ENCODE measurements at regions of chr3 and their contacts with region 1.

Region 1: DNA sequence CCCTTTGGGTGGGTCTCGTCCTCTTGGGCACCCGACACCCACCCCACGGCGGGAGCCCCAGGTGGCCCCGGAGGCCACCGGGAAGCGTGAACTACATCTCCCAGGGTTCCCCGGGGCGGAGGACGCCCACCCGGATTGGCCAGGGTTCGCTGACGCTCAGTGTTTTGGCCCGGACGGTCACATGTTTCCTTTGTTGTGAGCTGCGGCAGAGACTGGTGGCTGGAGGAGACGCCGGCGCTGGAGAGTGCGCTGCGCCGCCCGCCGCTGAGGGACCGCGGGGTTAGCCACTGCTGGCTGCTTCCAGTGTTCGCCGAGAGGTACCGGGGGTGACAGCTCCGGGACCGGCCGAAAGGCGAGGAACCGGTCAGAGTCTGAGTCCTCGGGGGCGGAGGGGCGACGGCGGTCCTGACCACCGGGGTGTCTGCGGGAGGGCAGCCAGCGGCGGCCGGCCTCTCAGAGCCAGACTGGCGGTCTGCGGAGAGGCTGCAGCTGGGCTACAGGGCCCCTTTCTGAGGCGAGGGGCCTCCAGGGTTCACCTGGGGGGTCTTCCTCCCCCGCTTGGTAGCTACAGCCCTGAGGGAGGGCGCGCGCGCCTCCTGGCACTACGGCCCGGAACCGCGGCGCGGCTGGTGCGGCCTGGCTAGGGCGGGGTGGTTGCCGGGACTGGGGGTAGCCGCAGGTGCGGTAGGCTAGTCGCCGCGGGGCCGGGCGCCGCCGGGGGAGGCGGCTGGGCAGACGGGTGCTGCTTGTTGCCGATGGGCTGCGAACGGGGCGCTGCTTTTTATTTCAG is at the start of gene KLHL24:
- DNase-seq: peak; percentile 87
- H3K4me3 Mint-ChIP-seq: peak within 1 kb of the TSS; percentile 91
- H3K27ac Mint-ChIP-seq: peak within 1 kb of the TSS; percentile 93
- H3K4me1 Mint-ChIP-seq: peaks cover 24% of the 10 kb centered on the region
- H3K27me3 Mint-ChIP-seq: no peaks in the 10 kb centered on the region
- total RNA-seq, gene KLHL24: 8.7 and 10.5 TPM in 2 replicates

Region 2: DNA sequence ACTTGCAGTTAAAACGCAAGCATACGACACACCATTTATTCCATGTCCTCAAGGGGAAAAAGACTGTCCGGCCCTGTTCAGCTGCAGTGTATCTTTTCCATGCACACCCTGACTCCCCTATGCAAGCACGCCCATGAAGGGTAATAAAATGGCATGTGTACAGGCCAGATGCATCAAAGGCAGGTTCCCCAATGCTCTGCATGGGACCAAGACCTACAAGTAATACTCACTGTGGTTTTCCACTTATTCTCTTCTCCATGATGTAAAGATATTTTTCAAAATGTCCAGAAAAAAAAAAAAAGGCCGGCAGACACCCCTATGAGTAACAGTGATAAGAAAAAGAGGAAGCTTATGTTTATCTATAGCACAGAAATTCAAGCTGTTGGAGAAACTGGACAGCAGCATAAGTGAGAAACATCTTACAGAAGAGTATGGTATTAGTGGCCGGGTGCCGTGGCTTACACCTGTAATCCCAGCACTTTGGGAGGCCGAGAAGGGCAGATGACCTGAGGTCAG is 278.0 kb before region 1 on chr3:
- intact Hi-C with region 1: no loop called
- DNase-seq: no peak
- H3K4me3 Mint-ChIP-seq: no peak overlapping the region
- H3K27ac Mint-ChIP-seq: no peak overlapping the region
- H3K4me1 Mint-ChIP-seq: peaks cover 14% of the 10 kb centered on the region
- H3K27me3 Mint-ChIP-seq: no peaks in the 10 kb centered on the region

Region 3: DNA sequence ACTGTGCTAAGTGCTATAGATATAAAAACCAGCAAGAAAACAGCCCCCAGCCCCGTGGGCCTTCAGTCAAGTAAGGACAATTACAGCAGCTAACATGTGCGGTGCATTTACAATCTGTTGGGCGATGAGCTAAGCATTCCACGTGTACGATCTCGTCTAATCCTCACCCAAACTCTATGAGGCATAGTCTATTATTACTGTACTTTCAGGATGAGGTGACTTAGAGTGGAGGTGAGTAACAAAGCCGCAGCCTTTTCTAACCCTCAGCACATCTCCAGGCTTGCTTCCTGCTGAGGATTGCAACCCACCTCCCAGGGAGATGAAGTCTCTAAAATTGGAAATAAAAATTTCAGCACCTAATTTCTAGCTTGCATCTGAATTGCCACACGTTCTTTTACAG is 154.0 kb before region 1 on chr3:
- intact Hi-C with region 1: loop called (anchors 5 kb)
- DNase-seq: no peak
- H3K4me3 Mint-ChIP-seq: no peak overlapping the region
- H3K27ac Mint-ChIP-seq: no peak overlapping the region
- H3K4me1 Mint-ChIP-seq: peaks cover 6% of the 10 kb centered on the region
- H3K27me3 Mint-ChIP-seq: no peaks in the 10 kb centered on the region

Region 4: DNA sequence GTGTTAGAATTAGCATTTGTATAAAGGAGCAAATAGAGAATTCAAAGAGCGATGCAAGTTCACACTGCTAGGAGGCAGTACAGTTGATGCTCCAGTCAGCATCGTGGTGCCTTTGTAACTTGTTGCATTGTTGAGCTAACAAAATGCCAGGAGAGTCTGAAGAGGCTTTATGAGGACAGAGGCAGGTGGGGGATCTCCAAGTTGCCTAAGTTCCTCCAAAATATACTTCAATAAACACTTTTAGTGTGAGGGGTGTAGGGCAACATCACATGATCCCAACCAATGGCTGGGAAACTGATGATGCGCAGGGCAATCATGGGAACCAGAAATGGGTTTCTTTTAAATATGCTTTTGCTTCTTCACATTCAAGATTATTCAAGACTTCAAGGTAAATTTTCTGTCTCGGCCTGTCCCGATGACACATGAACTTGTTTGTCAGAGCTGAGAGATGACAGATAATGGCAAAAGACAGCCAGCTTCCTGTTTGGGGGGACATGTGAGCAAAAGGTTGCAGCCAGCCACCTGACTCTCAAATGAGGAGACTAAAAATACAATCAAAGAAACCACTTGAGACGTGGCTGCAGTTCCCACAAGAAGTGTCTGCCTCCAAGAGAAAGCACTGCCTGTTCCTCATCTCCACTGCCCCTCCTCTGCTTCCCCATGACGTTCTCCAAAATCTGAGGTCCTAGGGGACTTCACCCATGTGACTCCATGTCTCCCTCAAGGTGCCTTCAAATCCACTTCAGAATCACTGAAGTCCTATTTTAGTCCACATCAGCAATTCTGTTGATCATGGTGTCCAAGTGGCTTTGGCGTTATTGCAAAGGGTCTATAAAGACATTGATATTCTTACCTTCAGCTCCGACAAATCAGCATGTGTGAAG is 119.4 kb before region 1 on chr3:
- intact Hi-C with region 1: loop called (anchors 1 kb)
- DNase-seq: peak; percentile 59
- H3K4me3 Mint-ChIP-seq: no peak overlapping the region
- H3K27ac Mint-ChIP-seq: peak overlapping the region; percentile 90
- H3K4me1 Mint-ChIP-seq: peaks cover 66% of the 10 kb centered on the region
- H3K27me3 Mint-ChIP-seq: no peaks in the 10 kb centered on the region

Region 5: GRCh38 chr3:183697610-183698317 is 62.1 kb after region 1 on chr3 and contains the start of gene YEATS2:
- intact Hi-C with region 1: loop called (anchors 1 kb)
- DNase-seq: peak; percentile 66
- H3K4me3 Mint-ChIP-seq: peak within 1 kb of the TSS; percentile 97
- H3K27ac Mint-ChIP-seq: peak within 1 kb of the TSS; percentile 84
- H3K4me1 Mint-ChIP-seq: peaks cover 29% of the 10 kb centered on the region
- H3K27me3 Mint-ChIP-seq: no peaks in the 10 kb centered on the region
- total RNA-seq, gene YEATS2: 56.7 and 60.1 TPM in 2 replicates

Region 6: GRCh38 chr3:183884427-183885296 is 249.0 kb after region 1 on chr3 and contains the start of gene PARL:
- intact Hi-C with region 1: loop called (anchors 5 kb)
- DNase-seq: peak; percentile 93
- H3K4me3 Mint-ChIP-seq: peak within 1 kb of the TSS; percentile 98
- H3K27ac Mint-ChIP-seq: peak within 1 kb of the TSS; percentile 95
- H3K4me1 Mint-ChIP-seq: peaks cover 25% of the 10 kb centered on the region
- H3K27me3 Mint-ChIP-seq: peaks cover 3% of the 10 kb centered on the region
- total RNA-seq, gene PARL: 74.9 and 81.7 TPM in 2 replicates

Measured in activated T-helper 2 cell treated with anti-CD3 and anti-CD28 coated beads, Interferon-gamma antibody, Interleukin-2, Interleukin-4, amounts not matched to agents 10 μg/mL and 5 μg/mL and 100 μg/mL, durations not matched to agents 14 hours and 24 hours and 36 hours (primary cell).